ENCODE measurements at regions of chr1 and their contacts with region 1.

Region 1: DNA sequence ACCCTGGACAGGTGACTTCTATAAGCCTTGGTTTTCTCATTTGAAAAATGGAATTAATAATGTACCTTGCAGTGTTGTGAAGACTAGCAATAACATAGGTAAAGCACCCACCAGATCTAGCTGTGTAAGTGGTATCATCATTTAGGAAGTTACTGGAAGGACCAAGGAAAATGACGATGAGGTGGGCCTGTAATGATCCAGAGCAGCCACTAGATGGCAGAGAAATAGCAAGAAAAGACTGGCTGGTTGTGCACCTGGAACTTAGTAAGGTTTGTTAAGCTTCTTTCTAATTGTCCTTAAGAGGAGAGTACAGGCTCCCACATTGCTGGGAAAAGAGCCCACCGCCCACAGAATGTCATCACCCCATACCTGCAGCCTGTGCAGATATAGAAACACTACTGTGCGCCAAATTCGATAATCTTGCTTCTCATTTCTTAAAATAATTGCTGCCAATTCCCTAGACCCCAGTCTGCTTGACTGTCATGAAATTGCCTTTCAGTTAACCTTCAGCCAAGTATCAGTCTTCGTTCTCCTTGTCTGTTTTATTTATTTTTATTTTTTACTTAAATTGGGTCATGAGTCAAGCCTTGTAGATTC is 37.2 kb downstream of the WNT4 start:
- DNase-seq: peak in 5 of 14 experiments; percentile 16 to 72 (median 61)
- ATAC-seq: peak; percentile 68
- H3K4me3 ChIP-seq: no peak overlapping the region
- H3K4me3 Mint-ChIP-seq: peak overlapping the region; percentile 64
- H3K27ac ChIP-seq: peak overlapping the region in 1 of 2 donors; percentile 8
- H3K27ac Mint-ChIP-seq: peak overlapping the region; percentile 77
- H3K4me1 ChIP-seq: peaks cover 43% of the 10 kb centered on the region
- H3K4me1 Mint-ChIP-seq: peaks cover 74% of the 10 kb centered on the region
- H3K27me3 ChIP-seq: no peaks in the 10 kb centered on the region
- H3K27me3 Mint-ChIP-seq: no peaks in the 10 kb centered on the region
- CTCF ChIP-seq: peak; percentile 85

Region 2: DNA sequence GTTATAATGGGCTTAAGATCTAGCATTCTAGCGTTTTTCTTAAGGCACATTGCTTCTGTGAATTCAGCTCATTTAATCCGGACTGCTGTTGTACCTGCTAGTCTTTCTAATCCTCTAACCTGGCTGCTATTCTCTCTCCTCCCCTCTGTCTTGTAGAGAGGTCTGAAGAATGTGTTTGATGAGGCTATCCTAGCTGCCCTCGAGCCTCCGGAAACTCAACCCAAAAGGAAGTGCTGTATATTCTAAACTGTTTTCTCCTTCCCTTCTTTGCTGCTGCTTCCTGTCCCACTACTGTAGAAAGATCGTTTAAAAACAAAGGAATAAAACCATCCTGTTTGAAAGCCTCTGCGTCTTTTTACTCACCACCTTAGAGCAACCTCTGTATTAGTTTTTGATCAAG is 15.9 kb before region 1 on chr1:
- CTCF ChIA-PET with region 1: interaction called, 12 read pairs
- POLR2A ChIA-PET with region 1: interaction called, 9 read pairs
- intact Hi-C with region 1: no loop called
- DNase-seq: peak in 2 of 14 experiments; percentile 17 to 30
- ATAC-seq: no peak
- H3K4me3 ChIP-seq: peak overlapping the region; percentile 24
- H3K4me3 Mint-ChIP-seq: peak overlapping the region; percentile 74
- H3K27ac ChIP-seq: peak overlapping the region; percentile 3 to 25
- H3K27ac Mint-ChIP-seq: peak overlapping the region; percentile 81
- H3K4me1 ChIP-seq: peaks cover 35% of the 10 kb centered on the region
- H3K4me1 Mint-ChIP-seq: peaks cover 94% of the 10 kb centered on the region
- H3K27me3 ChIP-seq: no peaks in the 10 kb centered on the region
- H3K27me3 Mint-ChIP-seq: no peaks in the 10 kb centered on the region
- CTCF ChIP-seq: no peak

Region 3: DNA sequence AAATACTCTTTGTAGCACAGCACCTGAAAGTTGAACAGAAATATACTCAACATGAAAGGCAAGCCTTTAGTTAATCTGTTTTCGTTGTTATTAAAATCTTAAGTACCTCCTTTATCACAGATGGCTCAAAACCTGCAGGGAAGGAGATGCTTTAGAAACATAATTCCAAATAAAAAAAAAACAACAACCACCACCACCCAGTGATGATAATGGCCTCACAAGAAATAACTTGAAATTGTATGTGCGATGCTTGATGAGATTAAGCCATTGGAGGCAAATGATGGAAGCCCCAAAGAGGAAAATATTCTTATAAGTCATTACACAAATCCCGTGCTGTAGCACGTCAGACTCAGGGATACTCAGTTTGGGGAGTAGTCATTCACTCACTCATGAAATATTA is 321.1 kb after region 1 on chr1:
- CTCF ChIA-PET with region 1: no interaction called
- POLR2A ChIA-PET with region 1: no interaction called
- intact Hi-C with region 1: no loop called
- DNase-seq: no peak
- ATAC-seq: no peak
- H3K4me3 ChIP-seq: no peak overlapping the region
- H3K4me3 Mint-ChIP-seq: no peak overlapping the region
- H3K27ac ChIP-seq: no peak overlapping the region
- H3K27ac Mint-ChIP-seq: no peak overlapping the region
- H3K4me1 ChIP-seq: no peaks in the 10 kb centered on the region
- H3K4me1 Mint-ChIP-seq: no peaks in the 10 kb centered on the region
- H3K27me3 ChIP-seq: no peaks in the 10 kb centered on the region
- H3K27me3 Mint-ChIP-seq: peaks cover 11% of the 10 kb centered on the region
- CTCF ChIP-seq: no peak

Region 4: GRCh38 chr1:22641906-22642636 is 536.4 kb after region 1 on chr1:
- CTCF ChIA-PET with region 1: no interaction called
- POLR2A ChIA-PET with region 1: no interaction called
- intact Hi-C with region 1: loop called in 1 of 2 experiments (anchors 1 kb)
- DNase-seq: peak; percentile 41 to 77 (median 60)
- ATAC-seq: peak; percentile 81
- H3K4me3 ChIP-seq: no peak overlapping the region
- H3K4me3 Mint-ChIP-seq: no peak overlapping the region
- H3K27ac ChIP-seq: no peak overlapping the region
- H3K27ac Mint-ChIP-seq: no peak overlapping the region
- H3K4me1 ChIP-seq: peaks cover 8% of the 10 kb centered on the region
- H3K4me1 Mint-ChIP-seq: no peaks in the 10 kb centered on the region
- H3K27me3 ChIP-seq: peaks cover 12 to 20% of the 10 kb centered on the region in 2 experiments
- H3K27me3 Mint-ChIP-seq: peaks cover 30% of the 10 kb centered on the region
- CTCF ChIP-seq: peak; percentile 74